ENCODE measurements at regions of chr9 and their contacts with region 1.

Region 1: GRCh38 chr9:4228606-4229005 is 71.3 kb downstream of the GLIS3 start:
- DNase-seq: no peak
- ATAC-seq: peak in 3 of 4 donors; percentile 60 to 71 (median 68)
- H3K4me3 ChIP-seq: no peak overlapping the region
- H3K27ac ChIP-seq: no peak overlapping the region
- H3K4me1 ChIP-seq: peaks cover 0 to 10% (median 0%) of the 10 kb centered on the region in 12 donors
- H3K27me3 ChIP-seq: no peaks in the 10 kb centered on the region
- CTCF ChIP-seq: peak; percentile 27 to 71 (median 54)
- POLR2A ChIP-seq: no peak

Region 2: DNA sequence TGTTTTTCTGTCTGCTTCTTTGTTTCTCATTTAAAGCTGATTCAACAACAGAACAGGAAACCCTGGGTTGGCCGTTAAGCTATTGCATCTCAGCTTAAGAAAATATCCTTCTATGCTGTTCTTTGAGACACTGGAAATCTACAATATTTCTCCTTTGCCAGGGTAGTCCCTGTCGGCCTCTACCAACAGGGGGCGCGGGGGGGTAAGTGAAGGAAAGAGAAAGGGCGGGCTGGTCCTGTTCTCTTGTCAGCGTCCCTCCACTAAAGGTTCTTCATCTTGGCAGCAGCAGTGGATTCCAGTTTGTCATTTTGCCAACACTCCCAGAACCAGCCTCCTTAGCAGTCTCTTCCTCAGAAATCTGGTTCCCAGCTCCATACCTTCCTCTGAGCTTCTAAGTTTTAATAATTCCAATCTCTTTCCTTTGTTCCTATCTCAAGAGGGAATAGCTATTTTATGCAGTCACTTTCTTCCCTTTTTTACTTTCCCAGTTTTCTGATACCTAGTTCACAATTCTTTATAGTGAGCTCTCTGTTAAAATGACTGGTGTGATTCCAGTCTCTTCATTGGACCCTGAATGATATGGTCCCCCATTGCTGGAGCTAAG is 151.0 kb before region 1 on chr9:
- intact Hi-C with region 1: loop called in 5 of 10 experiments (anchors 5 to 10 kb)
- DNase-seq: peak; percentile 74 to 88 (median 79)
- ATAC-seq: peak; percentile 71 to 92 (median 84)
- H3K4me3 ChIP-seq: no peak overlapping the region
- H3K27ac ChIP-seq: peak overlapping the region in 5 of 12 donors; percentile 12 to 40 (median 14)
- H3K4me1 ChIP-seq: peaks cover 0 to 7% (median 0%) of the 10 kb centered on the region in 12 donors
- H3K27me3 ChIP-seq: no peaks in the 10 kb centered on the region
- CTCF ChIP-seq: peak; percentile 40 to 72 (median 55)
- POLR2A ChIP-seq: no peak

Region 3: DNA sequence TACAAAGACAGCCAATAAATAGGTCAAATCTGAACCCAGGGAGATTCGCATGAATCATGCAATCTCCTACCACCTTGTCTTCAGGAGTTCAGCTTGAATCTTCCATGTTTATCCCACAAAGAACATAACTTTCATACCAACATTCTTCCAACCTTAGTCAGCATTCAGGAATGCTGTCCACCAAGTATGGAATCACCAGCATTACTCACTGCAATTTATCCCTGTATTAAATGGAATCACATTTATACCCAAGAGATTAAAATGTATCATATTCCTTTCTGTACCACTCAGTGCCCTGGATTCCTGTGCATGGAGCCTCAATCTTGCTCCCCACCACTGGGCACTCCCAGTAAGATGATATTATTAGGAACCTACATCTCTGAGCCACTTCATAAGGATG is 91.4 kb before region 1 on chr9:
- intact Hi-C with region 1: loop called in 1 of 10 experiments (anchors 10 kb)
- DNase-seq: no peak
- ATAC-seq: peak in 1 of 4 donors; percentile 57
- H3K4me3 ChIP-seq: no peak overlapping the region
- H3K27ac ChIP-seq: no peak overlapping the region
- H3K4me1 ChIP-seq: peaks cover 0 to 22% (median 2%) of the 10 kb centered on the region in 12 donors
- H3K27me3 ChIP-seq: no peaks in the 10 kb centered on the region
- CTCF ChIP-seq: no peak
- POLR2A ChIP-seq: no peak

Region 4: GRCh38 chr9:4734150-4734549 is 505.5 kb after region 1 on chr9:
- intact Hi-C with region 1: no loop called
- DNase-seq: no peak
- ATAC-seq: peak in 1 of 4 donors; percentile 38
- H3K4me3 ChIP-seq: no peak overlapping the region
- H3K27ac ChIP-seq: no peak overlapping the region
- H3K4me1 ChIP-seq: peaks cover 0 to 26% (median 8%) of the 10 kb centered on the region in 12 donors
- H3K27me3 ChIP-seq: no peaks in the 10 kb centered on the region
- CTCF ChIP-seq: no peak
- POLR2A ChIP-seq: no peak